ENCODE measurements at regions of chr3 and their contacts with region 1.

Region 1: GRCh38 chr3:182713743-182714517 is 79.4 kb upstream of the ATP11B start:
- DNase-seq: peak; percentile 81
- ATAC-seq: peak; percentile 72
- H3K4me3 ChIP-seq: no peak overlapping the region
- H3K27ac ChIP-seq: no peak overlapping the region
- H3K4me1 ChIP-seq: 0 out of 2 replicates have a peak, but pooled peaks cover 3% of the 10 kb centered on the region
- H3K27me3 ChIP-seq: no peaks in the 10 kb centered on the region
- CTCF ChIP-seq: peak; percentile 74

Region 2: GRCh38 chr3:182760576-182761164 is 46.7 kb after region 1 on chr3:
- CTCF ChIA-PET with region 1: no interaction called
- POLR2A ChIA-PET with region 1: no interaction called
- intact Hi-C with region 1: no loop called
- DNase-seq: no peak
- ATAC-seq: no peak
- H3K4me3 ChIP-seq: no peak overlapping the region
- H3K27ac ChIP-seq: no peak overlapping the region
- H3K4me1 ChIP-seq: peaks cover 2% of the 10 kb centered on the region
- H3K27me3 ChIP-seq: no peaks in the 10 kb centered on the region
- CTCF ChIP-seq: no peak

Region 3: GRCh38 chr3:182837855-182838454 is 124.0 kb after region 1 on chr3:
- CTCF ChIA-PET with region 1: interaction called, 28 read pairs
- POLR2A ChIA-PET with region 1: interaction called, 3 read pairs
- intact Hi-C with region 1: loop called (anchors 1 kb)
- DNase-seq: peak; percentile 65
- ATAC-seq: no peak
- H3K4me3 ChIP-seq: no peak overlapping the region
- H3K27ac ChIP-seq: no peak overlapping the region
- H3K4me1 ChIP-seq: peaks cover 2% of the 10 kb centered on the region
- H3K27me3 ChIP-seq: no peaks in the 10 kb centered on the region
- CTCF ChIP-seq: peak; percentile 74

Region 4: DNA sequence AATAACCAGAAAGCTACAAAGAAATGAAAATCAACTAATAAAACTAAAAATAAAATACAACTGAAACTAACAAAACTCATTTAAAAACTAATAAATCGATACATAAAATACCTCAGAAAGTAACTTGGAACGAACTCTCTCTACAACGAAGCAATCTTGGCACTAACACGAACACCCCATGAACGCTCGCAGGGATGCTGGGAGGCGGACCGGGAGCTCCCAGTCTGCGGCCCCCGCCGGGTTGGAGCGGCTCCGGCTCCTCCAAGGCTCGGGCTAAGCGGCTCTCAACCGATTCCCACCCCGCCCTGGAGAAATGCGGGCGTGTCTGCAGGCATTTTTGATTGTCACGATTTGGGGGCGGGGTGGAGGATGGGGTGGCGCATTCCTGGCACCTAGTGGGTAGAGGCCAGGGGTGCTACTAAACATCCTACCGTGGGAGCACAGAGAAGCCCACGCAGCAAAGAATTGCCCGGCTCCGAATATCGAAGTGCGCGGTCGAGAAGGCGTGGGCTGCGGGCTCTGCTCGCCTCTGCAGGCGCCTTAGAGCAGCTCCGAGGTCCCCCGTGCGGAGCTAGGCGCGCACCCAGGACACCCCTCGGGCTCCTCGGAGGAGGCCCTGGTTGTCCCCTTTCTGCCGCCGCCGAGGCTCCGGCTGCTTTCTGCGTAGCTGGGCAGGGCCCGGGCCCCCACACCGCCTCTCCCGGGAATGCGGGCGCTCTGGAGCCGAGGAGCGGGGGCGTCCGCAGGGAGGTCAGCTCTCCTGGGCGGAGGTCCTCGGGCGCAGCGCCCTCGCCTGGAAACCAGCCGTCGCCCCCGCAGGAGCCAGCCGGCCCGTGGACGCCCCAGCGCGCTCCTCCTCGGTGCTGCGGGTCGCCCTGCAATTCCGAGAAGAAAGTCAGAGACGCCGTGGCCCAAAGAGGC is 465.0 kb after region 1 on chr3:
- CTCF ChIA-PET with region 1: no interaction called
- POLR2A ChIA-PET with region 1: no interaction called
- intact Hi-C with region 1: loop called (anchors 5 kb)
- DNase-seq: peak; percentile 70
- ATAC-seq: peak; percentile 61
- H3K4me3 ChIP-seq: peak overlapping the region; percentile 85
- H3K27ac ChIP-seq: no peak overlapping the region
- H3K4me1 ChIP-seq: peaks cover 17% of the 10 kb centered on the region; the same call in 1 of the 2 replicates
- H3K27me3 ChIP-seq: no peaks in the 10 kb centered on the region
- CTCF ChIP-seq: peak; percentile 60